Activated CD4-positive, alpha-beta T cell treated with anti-CD3 and anti-CD28 coated beads, Interleukin-2, amount 10 ng/mL, durations not matched to agents 24 days and 14 days (primary cell): ENCODE measurements at regions of chr2 and their contacts with region 1.

Region 1: DNA sequence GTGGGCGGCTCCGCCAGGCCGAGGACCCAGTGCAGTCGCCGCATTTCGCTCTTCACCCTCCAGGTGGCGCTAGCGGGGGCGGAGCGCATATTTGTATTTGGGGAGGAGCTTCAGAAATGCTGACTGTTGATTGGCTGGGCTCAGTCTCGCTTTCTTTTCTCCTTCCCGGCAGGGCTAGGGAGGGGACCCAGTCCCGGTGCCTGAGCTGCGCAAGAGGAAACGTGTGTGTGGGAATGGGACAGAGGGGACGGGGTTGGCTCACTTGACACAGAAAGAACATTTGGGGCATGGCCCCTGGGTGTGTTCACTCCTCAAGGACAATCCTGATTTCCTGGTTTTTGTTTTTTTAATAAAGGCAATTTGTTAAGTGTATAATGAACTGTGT is 20.3 kb upstream of the DNMT3A start:
- DNase-seq: peak; percentile 99
- H3K4me3 Mint-ChIP-seq: peak overlapping the region; percentile 84
- H3K27ac Mint-ChIP-seq: peak overlapping the region; percentile 91
- H3K4me1 Mint-ChIP-seq: peaks cover 19% of the 10 kb centered on the region
- H3K27me3 Mint-ChIP-seq: no peaks in the 10 kb centered on the region

Region 2: DNA sequence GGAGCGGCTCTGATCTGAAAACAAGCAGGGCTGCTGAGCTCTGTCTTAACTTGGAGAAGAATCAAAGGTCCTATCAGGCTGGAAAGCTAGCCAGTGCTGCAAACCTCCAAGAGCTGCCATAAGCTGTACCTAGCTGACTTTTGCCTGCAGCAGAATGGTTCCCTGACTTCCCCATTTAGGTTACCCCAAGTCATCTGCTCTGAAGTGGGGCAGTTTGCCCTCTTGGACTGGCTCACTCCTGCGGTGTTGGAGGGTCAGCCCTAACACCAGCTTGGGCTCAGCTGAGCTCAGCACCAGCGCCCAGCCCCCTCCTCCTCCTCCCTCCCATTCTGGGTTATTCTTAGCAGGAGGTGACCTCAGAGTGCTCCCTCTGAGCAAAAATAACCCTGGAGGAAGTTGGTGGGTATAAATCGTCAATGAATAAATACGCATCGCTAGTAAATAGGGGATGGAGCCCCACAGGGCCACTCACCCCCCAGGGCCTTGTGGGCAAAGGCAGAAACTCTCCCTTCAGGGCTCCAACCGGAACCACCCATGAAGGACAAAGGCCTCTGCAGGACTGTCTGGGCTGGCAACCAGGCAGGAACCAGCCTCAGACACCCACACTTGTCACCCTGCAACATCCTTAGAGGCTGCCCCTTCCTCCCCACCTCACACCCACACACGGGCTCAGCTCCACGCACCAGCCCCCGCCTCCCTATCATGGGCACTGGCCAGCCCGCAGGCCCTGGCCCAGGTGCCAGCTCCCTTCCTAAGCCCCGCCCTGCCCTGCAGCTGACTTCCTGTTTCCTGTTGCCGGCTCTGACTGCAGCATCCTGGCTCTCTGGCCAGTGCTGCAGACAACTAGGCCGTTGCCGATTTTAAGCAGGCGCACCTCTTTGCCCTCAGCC is 67.2 kb before region 1 on chr2:
- intact Hi-C with region 1: loop called (anchors 2 kb)
- DNase-seq: peak; percentile 95
- H3K4me3 Mint-ChIP-seq: peak overlapping the region; percentile 80
- H3K27ac Mint-ChIP-seq: peak overlapping the region; percentile 95
- H3K4me1 Mint-ChIP-seq: peaks cover 43% of the 10 kb centered on the region
- H3K27me3 Mint-ChIP-seq: no peaks in the 10 kb centered on the region

Region 3: DNA sequence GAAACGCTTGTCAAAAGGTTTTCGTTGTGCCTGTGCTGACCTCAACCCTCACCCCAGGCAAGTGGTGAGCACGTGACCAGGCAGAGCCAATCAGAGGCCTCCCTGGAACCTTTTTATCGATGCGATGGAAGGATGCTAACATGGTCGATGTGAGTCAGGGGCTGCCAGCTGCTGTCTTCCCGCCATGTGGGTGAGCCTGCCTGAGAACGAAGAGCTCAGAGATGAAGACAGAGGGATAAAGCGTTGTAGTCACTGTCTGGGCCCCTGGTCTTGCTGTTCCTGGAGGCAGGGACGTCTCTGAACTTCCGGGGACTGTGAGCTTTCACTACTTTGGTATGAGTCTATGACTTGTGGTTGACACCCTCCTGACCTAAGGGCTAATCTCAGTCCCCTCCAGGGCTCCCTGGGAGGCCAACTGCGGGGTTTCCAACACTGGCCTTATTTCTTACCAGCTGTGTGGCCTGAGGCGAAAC is 39.0 kb before region 1 on chr2:
- intact Hi-C with region 1: no loop called
- DNase-seq: no peak
- H3K4me3 Mint-ChIP-seq: peak overlapping the region; percentile 76
- H3K27ac Mint-ChIP-seq: peak overlapping the region; percentile 93
- H3K4me1 Mint-ChIP-seq: peaks cover 48% of the 10 kb centered on the region
- H3K27me3 Mint-ChIP-seq: no peaks in the 10 kb centered on the region

Region 4: DNA sequence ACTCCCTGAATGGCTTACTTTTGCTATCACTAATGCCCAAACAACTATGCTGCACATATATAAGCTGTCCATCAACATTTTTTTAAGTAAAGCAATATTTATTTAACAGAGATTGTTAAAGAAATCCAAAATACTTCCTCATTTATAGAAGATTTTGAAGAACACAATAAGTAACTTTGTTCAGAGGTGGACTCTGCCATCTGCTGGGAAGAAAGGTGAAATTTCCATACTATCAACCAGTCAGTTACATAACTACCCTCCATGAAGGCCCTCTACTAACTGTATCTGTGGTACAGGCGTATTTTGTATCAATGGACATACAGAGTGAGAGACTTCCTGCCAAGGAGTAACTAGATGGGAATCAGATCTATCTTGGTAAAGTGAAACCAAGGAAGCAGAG is 205.4 kb after region 1 on chr2:
- intact Hi-C with region 1: loop called (anchors 2 kb)
- DNase-seq: peak; percentile 80
- H3K4me3 Mint-ChIP-seq: no peak overlapping the region
- H3K27ac Mint-ChIP-seq: no peak overlapping the region
- H3K4me1 Mint-ChIP-seq: peaks cover 12% of the 10 kb centered on the region
- H3K27me3 Mint-ChIP-seq: no peaks in the 10 kb centered on the region